Thyroid gland (tissue), 4 donors: ENCODE measurements at regions of chr3 and their contacts with region 1.

Region 1: GRCh38 chr3:8441969-8442559 is 59.6 kb upstream of the LMCD1 start:
- DNase-seq: peak in 1 of 2 donors; percentile 4
- H3K4me3 ChIP-seq: no peak overlapping the region
- H3K27ac ChIP-seq: no peak overlapping the region
- H3K4me1 ChIP-seq: peaks cover 0 to 16% of the 10 kb centered on the region in 2 donors
- H3K27me3 ChIP-seq: no peaks in the 10 kb centered on the region
- CTCF ChIP-seq: peak; percentile 25 to 80 (median 56)
- POLR2A ChIP-seq: no peak

Region 2: DNA sequence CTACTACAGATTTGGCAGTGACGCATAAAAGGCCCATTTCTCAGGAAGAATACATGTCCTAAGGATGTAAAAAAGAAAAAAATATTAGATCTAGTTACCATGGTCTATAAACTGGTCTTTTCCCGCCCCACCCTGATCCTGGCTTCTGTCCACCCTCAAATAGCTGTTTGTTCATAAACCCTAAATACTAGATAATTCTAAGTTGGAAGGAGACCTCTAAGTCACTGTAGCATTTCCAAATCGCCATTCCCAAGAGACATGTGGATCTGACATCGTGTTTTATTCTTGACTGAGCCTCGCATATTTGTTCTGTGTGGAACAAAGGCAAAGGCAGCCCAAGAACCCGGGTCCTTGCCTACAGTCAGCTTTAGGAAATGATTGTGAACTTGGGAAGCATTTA is 108.5 kb after region 1 on chr3:
- intact Hi-C with region 1: no loop called
- DNase-seq: no peak
- H3K4me3 ChIP-seq: no peak overlapping the region
- H3K27ac ChIP-seq: no peak overlapping the region
- H3K4me1 ChIP-seq: peaks cover 0 to 7% of the 10 kb centered on the region in 2 donors
- H3K27me3 ChIP-seq: no peaks in the 10 kb centered on the region
- CTCF ChIP-seq: no peak
- POLR2A ChIP-seq: no peak

Region 3: GRCh38 chr3:8607234-8608040 is 165.4 kb after region 1 on chr3:
- intact Hi-C with region 1: loop called (anchors 5 kb)
- DNase-seq: peak; percentile 30 to 37
- H3K4me3 ChIP-seq: no peak overlapping the region
- H3K27ac ChIP-seq: no peak overlapping the region
- H3K4me1 ChIP-seq: no peaks in the 10 kb centered on the region
- H3K27me3 ChIP-seq: no peaks in the 10 kb centered on the region
- CTCF ChIP-seq: peak in 3 of 6 experiments; percentile 30 to 46 (median 38)
- POLR2A ChIP-seq: no peak

Region 4: GRCh38 chr3:8622873-8623691 is 181.0 kb after region 1 on chr3:
- intact Hi-C with region 1: loop called (anchors 2 kb)
- DNase-seq: peak; percentile 64 to 66
- H3K4me3 ChIP-seq: no peak overlapping the region
- H3K27ac ChIP-seq: no peak overlapping the region
- H3K4me1 ChIP-seq: peaks cover 0 to 3% of the 10 kb centered on the region in 2 donors
- H3K27me3 ChIP-seq: no peaks in the 10 kb centered on the region
- CTCF ChIP-seq: peak; percentile 75 to 92 (median 86)
- POLR2A ChIP-seq: no peak